ENCODE measurements at regions of chr6 and their contacts with region 1.

Region 1: GRCh38 chr6:167268683-167269280 is 22.3 kb upstream of the UNC93A start:
- DNase-seq: peak; percentile 93 to 94
- H3K4me3 ChIP-seq: peak overlapping the region; percentile 11; the same call in 1 of the 2 replicates
- H3K4me3 Mint-ChIP-seq: peak overlapping the region; percentile 72
- H3K27ac Mint-ChIP-seq: peak overlapping the region; percentile 94
- H3K4me1 ChIP-seq: peaks cover 68% of the 10 kb centered on the region
- H3K4me1 Mint-ChIP-seq: peaks cover 55% of the 10 kb centered on the region
- H3K27me3 ChIP-seq: no peaks in the 10 kb centered on the region
- H3K27me3 Mint-ChIP-seq: no peaks in the 10 kb centered on the region
- CTCF ChIP-seq: no peak

Region 2: DNA sequence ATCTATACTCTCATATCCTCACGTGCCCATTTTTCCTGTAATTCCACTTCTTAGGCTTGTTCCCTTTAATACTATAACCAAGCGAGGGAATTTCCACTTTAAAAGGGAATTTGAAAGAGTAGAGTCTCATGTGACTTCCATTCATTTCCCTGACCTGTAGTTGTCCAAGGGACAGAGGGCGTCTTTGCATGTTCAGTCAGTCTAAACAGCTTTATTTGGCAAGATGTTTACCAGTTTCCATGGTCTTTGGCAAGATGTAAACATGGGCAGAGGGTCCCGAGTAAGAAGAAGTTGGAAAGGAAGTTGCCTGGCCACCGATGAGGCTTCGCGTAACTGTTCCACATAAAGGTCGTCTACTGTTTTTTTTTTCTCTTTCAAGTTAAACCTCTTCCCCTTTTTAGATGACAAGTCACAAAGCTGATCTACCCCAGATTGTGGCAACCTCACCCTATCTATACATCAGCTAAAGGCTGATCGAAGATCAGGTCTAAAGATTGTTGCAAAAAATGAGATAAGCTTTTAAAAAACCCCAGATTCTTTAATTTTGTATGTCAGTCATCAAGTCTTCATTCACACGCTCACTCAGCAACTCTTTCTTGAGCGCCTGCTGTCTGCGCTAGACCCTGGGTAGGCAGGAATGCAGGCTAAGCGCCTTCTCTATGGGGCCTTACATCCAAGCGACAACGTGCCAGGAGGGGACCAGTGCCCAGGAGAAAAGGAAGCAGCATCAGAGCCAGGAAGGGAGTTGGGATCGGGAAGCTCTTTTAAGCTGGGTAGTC is 177.6 kb before region 1 on chr6:
- CTCF ChIA-PET with region 1: no interaction called
- POLR2A ChIA-PET with region 1: no interaction called
- intact Hi-C with region 1: no loop called
- DNase-seq: no peak
- H3K4me3 ChIP-seq: no peak overlapping the region
- H3K4me3 Mint-ChIP-seq: no peak overlapping the region
- H3K27ac Mint-ChIP-seq: no peak overlapping the region
- H3K4me1 ChIP-seq: no peaks in the 10 kb centered on the region
- H3K4me1 Mint-ChIP-seq: no peaks in the 10 kb centered on the region
- H3K27me3 ChIP-seq: no peaks in the 10 kb centered on the region
- H3K27me3 Mint-ChIP-seq: no peaks in the 10 kb centered on the region
- CTCF ChIP-seq: no peak

Region 3: GRCh38 chr6:167221400-167222201 is 47.2 kb before region 1 on chr6:
- CTCF ChIA-PET with region 1: no interaction called
- POLR2A ChIA-PET with region 1: interaction called, 5 read pairs
- intact Hi-C with region 1: loop called (anchors 1 kb)
- DNase-seq: no peak
- H3K4me3 ChIP-seq: no peak overlapping the region
- H3K4me3 Mint-ChIP-seq: peak overlapping the region; percentile 76
- H3K27ac Mint-ChIP-seq: no peak overlapping the region
- H3K4me1 ChIP-seq: peaks cover 59% of the 10 kb centered on the region
- H3K4me1 Mint-ChIP-seq: peaks cover 51% of the 10 kb centered on the region
- H3K27me3 ChIP-seq: no peaks in the 10 kb centered on the region
- H3K27me3 Mint-ChIP-seq: no peaks in the 10 kb centered on the region
- CTCF ChIP-seq: no peak

Region 4: GRCh38 chr6:167238146-167238693 is 30.6 kb before region 1 on chr6:
- CTCF ChIA-PET with region 1: no interaction called
- POLR2A ChIA-PET with region 1: interaction called, 4 read pairs
- intact Hi-C with region 1: loop called (anchors 2 kb)
- DNase-seq: no peak
- H3K4me3 ChIP-seq: no peak overlapping the region
- H3K4me3 Mint-ChIP-seq: no peak overlapping the region
- H3K27ac Mint-ChIP-seq: peak overlapping the region; percentile 39
- H3K4me1 ChIP-seq: peaks cover 57% of the 10 kb centered on the region
- H3K4me1 Mint-ChIP-seq: peaks cover 24% of the 10 kb centered on the region
- H3K27me3 ChIP-seq: no peaks in the 10 kb centered on the region
- H3K27me3 Mint-ChIP-seq: no peaks in the 10 kb centered on the region
- CTCF ChIP-seq: no peak

Region 5: GRCh38 chr6:167285077-167285770 is 16.4 kb after region 1 on chr6:
- CTCF ChIA-PET with region 1: interaction called, 4 read pairs
- POLR2A ChIA-PET with region 1: interaction called, 4 read pairs
- intact Hi-C with region 1: loop called (anchors 1 kb)
- DNase-seq: no peak
- H3K4me3 ChIP-seq: no peak overlapping the region
- H3K4me3 Mint-ChIP-seq: no peak overlapping the region
- H3K27ac Mint-ChIP-seq: no peak overlapping the region
- H3K4me1 ChIP-seq: peaks cover 27% of the 10 kb centered on the region
- H3K4me1 Mint-ChIP-seq: peaks cover 29% of the 10 kb centered on the region
- H3K27me3 ChIP-seq: no peaks in the 10 kb centered on the region
- H3K27me3 Mint-ChIP-seq: no peaks in the 10 kb centered on the region
- CTCF ChIP-seq: no peak

Region 6: GRCh38 chr6:167341665-167342655 is 73.2 kb after region 1 on chr6:
- CTCF ChIA-PET with region 1: no interaction called
- POLR2A ChIA-PET with region 1: interaction called, 3 read pairs
- intact Hi-C with region 1: loop called (anchors 1 kb)
- DNase-seq: peak; percentile 89 to 93
- H3K4me3 ChIP-seq: no peak overlapping the region
- H3K4me3 Mint-ChIP-seq: peak overlapping the region; percentile 51
- H3K27ac Mint-ChIP-seq: peak overlapping the region; percentile 93
- H3K4me1 ChIP-seq: peaks cover 33% of the 10 kb centered on the region
- H3K4me1 Mint-ChIP-seq: peaks cover 56% of the 10 kb centered on the region
- H3K27me3 ChIP-seq: no peaks in the 10 kb centered on the region
- H3K27me3 Mint-ChIP-seq: no peaks in the 10 kb centered on the region
- CTCF ChIP-seq: no peak

Region 7: GRCh38 chr6:167350731-167351655 is 82.2 kb after region 1 on chr6:
- CTCF ChIA-PET with region 1: interaction called, 5 read pairs
- POLR2A ChIA-PET with region 1: interaction called, 6 read pairs
- intact Hi-C with region 1: loop called (anchors 2 kb)
- DNase-seq: peak; percentile 87 to 91
- H3K4me3 ChIP-seq: peak overlapping the region; percentile 61
- H3K4me3 Mint-ChIP-seq: peak overlapping the region; percentile 95
- H3K27ac Mint-ChIP-seq: peak overlapping the region; percentile 96
- H3K4me1 ChIP-seq: peaks cover 27% of the 10 kb centered on the region
- H3K4me1 Mint-ChIP-seq: peaks cover 24% of the 10 kb centered on the region
- H3K27me3 ChIP-seq: no peaks in the 10 kb centered on the region
- H3K27me3 Mint-ChIP-seq: no peaks in the 10 kb centered on the region
- CTCF ChIP-seq: peak; percentile 87 to 93

Region 8: GRCh38 chr6:167401525-167402194 is 132.9 kb after region 1 on chr6:
- CTCF ChIA-PET with region 1: no interaction called
- POLR2A ChIA-PET with region 1: no interaction called
- intact Hi-C with region 1: no loop called
- DNase-seq: peak in 1 of 2 experiments; percentile 21
- H3K4me3 ChIP-seq: no peak overlapping the region
- H3K4me3 Mint-ChIP-seq: no peak overlapping the region
- H3K27ac Mint-ChIP-seq: no peak overlapping the region
- H3K4me1 ChIP-seq: peaks cover 13% of the 10 kb centered on the region
- H3K4me1 Mint-ChIP-seq: peaks cover 10% of the 10 kb centered on the region
- H3K27me3 ChIP-seq: no peaks in the 10 kb centered on the region; the same call in 1 of the 2 replicates
- H3K27me3 Mint-ChIP-seq: no peaks in the 10 kb centered on the region
- CTCF ChIP-seq: no peak

Region 9: GRCh38 chr6:167968091-167968490 is 699.3 kb after region 1 on chr6:
- CTCF ChIA-PET with region 1: no interaction called
- POLR2A ChIA-PET with region 1: no interaction called
- intact Hi-C with region 1: loop called (anchors 10 kb)
- DNase-seq: peak in 1 of 2 experiments; percentile 68
- H3K4me3 ChIP-seq: no peak overlapping the region
- H3K4me3 Mint-ChIP-seq: no peak overlapping the region
- H3K27ac Mint-ChIP-seq: peak overlapping the region; percentile 62
- H3K4me1 ChIP-seq: peaks cover 24% of the 10 kb centered on the region
- H3K4me1 Mint-ChIP-seq: peaks cover 34% of the 10 kb centered on the region
- H3K27me3 ChIP-seq: no peaks in the 10 kb centered on the region
- H3K27me3 Mint-ChIP-seq: no peaks in the 10 kb centered on the region
- CTCF ChIP-seq: peak; percentile 38 to 39

Measured in Caco-2 (cell line).